A549 (cell line): ENCODE measurements at regions of chr19 and their contacts with region 1.

Region 1: DNA sequence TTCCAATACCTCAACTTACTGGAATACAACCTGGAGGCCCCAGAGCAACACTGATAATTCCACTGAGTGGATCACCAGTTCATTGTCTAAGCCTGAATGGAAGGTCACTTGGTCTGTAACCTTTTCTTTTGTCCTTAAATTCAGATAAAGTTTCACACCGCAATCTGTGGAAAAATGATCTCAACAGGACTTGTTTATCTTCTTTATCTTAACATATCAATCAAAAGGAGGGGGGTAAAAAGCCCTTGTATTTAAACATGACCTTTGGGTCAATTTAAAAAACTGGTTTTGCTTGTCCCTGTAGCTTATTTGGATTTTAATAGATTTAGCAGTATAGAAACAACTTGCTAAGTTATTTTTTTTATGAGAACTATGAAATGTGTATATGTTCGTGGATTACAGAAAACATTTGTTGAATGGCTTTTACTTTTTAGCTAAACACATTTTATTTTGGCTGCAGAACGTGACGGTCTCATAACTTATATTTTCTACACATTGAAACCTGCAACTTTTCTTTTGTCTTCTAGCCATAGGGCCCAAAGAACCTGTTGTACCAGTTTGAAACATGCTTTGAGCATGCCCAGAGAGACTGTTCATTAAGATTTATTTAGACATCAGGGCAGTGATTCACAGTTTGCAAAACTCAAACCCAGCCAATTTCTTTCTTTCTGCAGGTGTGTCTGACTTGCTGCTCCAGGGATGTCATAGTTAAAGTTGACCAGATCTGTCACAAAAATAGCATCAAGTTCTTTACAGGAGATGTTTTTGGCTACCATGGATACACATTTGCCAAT is 21.8 kb downstream of the SAE1 start:
- DNase-seq: no peak
- ATAC-seq: no peak
- H3K4me3 ChIP-seq: no peak overlapping the region
- H3K27ac ChIP-seq: no peak overlapping the region
- H3K4me1 ChIP-seq: peaks cover 7% of the 10 kb centered on the region; the same call in 2 of the 3 replicates
- CTCF ChIP-seq: no peak
- EP300 ChIP-seq: no peak
- POLR2A ChIP-seq: no peak
- RAD21 ChIP-seq: no peak

Region 2: DNA sequence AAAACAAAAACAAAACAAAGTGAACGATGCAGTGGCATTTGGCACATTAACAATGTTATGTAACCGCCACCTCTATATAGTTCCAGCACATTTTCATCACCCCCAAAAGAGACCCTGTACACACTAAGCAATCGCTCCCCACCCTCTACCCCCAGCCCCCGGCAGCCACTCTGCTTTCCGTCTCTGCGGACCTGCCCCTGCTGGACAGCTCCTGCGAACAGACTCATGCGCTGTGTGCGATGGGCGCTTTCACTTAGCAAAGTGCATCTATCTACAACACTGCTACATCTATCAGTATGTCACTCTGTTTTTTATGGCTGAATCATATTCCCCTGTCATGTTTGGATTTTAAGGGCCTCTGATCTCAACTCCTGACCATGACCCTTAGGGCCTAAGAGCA is 78.8 kb before region 1 on chr19:
- CTCF ChIA-PET with region 1: no interaction called
- POLR2A ChIA-PET with region 1: no interaction called
- DNase-seq: no peak
- ATAC-seq: no peak
- H3K4me3 ChIP-seq: no peak overlapping the region
- H3K27ac ChIP-seq: no peak overlapping the region
- H3K4me1 ChIP-seq: no peaks in the 10 kb centered on the region
- CTCF ChIP-seq: no peak
- EP300 ChIP-seq: no peak
- POLR2A ChIP-seq: no peak
- RAD21 ChIP-seq: no peak

Region 3: DNA sequence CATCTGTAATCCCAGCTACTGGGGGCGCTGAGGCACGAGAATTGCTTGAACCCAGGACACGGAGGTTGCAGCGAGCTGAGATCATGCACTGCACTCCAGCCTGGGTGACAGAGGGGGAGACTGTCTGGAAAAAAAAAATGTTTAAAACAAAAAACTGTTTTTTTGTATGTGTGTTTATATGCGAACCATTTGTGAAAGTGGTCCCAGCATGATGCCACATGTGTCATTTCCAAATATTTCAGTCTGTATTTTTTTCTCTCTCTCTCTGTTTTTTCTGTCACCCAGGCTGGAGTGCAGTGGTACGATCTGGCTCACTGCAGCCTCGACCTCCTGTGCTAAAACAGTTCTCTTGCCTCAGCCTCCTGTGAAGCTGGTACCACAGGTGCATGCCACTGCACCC is 15.6 kb after region 1 on chr19:
- CTCF ChIA-PET with region 1: interaction called, 26 read pairs
- POLR2A ChIA-PET with region 1: no interaction called
- DNase-seq: no peak
- ATAC-seq: no peak
- H3K4me3 ChIP-seq: no peak overlapping the region
- H3K27ac ChIP-seq: no peak overlapping the region
- H3K4me1 ChIP-seq: no peaks in the 10 kb centered on the region
- CTCF ChIP-seq: no peak
- EP300 ChIP-seq: no peak
- POLR2A ChIP-seq: no peak
- RAD21 ChIP-seq: no peak

Region 4: DNA sequence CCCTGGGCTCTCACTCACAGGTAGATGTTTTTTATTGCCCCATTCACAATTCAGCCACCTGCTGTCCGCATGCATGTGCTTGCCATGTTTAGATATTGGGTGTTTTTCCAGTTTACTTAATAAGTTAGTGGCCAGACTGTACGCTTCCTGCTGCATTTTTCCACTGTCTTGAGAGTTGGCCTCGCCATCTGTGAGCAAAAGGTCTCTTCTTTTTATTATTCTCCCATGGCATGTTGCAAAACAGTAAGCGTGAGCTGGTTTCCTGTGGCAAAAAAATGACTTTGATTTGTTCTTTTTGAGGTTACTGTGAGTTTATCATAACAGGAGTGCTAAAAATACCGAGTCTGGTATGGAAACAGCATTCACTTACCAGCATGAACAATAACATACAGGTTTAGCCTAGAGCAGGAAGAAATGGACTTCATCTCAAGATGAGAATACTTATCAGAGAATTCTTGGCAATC is 24.2 kb after region 1 on chr19:
- CTCF ChIA-PET with region 1: interaction called, 12 read pairs
- POLR2A ChIA-PET with region 1: no interaction called
- DNase-seq: no peak
- ATAC-seq: no peak
- H3K4me3 ChIP-seq: no peak overlapping the region
- H3K27ac ChIP-seq: no peak overlapping the region
- H3K4me1 ChIP-seq: peaks cover 11% of the 10 kb centered on the region; the same call in 2 of the 3 replicates
- CTCF ChIP-seq: no peak
- EP300 ChIP-seq: no peak
- POLR2A ChIP-seq: no peak
- RAD21 ChIP-seq: no peak

Region 5: GRCh38 chr19:47256688-47257443 is 104.4 kb after region 1 on chr19:
- CTCF ChIA-PET with region 1: interaction called, 28 read pairs
- POLR2A ChIA-PET with region 1: interaction called, 3 read pairs
- DNase-seq: peak; percentile 99 to 100
- ATAC-seq: peak; percentile 71 to 85
- H3K4me3 ChIP-seq: peak overlapping the region; percentile 61
- H3K27ac ChIP-seq: peak overlapping the region; percentile 91 to 92
- H3K4me1 ChIP-seq: peaks cover 30% of the 10 kb centered on the region
- CTCF ChIP-seq: no peak
- EP300 ChIP-seq: no peak
- POLR2A ChIP-seq: no peak
- RAD21 ChIP-seq: no peak